Colonic mucosa (tissue), 4 donors: ENCODE measurements at regions of chr17 and their contacts with region 1.

Region 1: DNA sequence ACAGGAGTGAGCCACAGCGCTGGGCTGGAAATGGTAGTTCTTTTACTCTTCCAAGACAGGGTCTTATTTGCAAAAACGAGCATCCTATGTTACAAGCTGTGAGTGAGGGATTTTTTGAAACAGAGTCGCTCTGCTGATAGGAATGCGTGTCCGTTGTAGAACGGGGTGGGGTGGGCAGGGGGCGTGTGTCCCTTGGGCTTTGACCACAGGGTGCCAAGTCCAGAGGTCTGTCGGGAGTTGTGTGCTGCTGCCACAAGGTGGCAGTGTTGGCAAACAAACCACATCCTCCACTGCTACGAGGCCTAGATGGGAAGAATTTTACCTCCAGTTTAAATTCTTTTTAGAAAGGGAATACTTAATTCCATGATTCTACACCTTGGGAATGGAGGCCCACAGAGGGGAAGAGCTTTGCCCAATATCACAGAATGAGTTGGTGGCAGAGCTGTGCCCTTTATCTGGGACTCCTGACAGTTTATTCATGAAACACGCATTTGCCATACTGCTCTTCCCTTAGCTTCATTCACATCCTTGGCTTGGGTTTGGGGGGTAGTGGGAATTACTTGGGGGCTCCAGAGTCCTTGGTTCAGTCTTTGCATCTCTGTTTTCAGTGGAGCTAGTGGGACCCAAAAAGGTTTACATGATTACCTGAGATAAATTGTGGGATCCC is 30.6 kb upstream of the ETV4 start:
- DNase-seq: peak; percentile 76
- H3K4me3 ChIP-seq: no peak overlapping the region
- H3K27ac ChIP-seq: no peak overlapping the region
- H3K4me1 ChIP-seq: peaks cover 8% of the 10 kb centered on the region
- H3K27me3 ChIP-seq: no peaks in the 10 kb centered on the region
- CTCF ChIP-seq: peak; percentile 89

Region 2: GRCh38 chr17:43524945-43525575 is 51.6 kb before region 1 on chr17:
- intact Hi-C with region 1: loop called (anchors 5 kb)
- DNase-seq: no peak
- H3K4me3 ChIP-seq: no peak overlapping the region
- H3K27ac ChIP-seq: no peak overlapping the region
- H3K4me1 ChIP-seq: no peaks in the 10 kb centered on the region
- H3K27me3 ChIP-seq: no peaks in the 10 kb centered on the region
- CTCF ChIP-seq: no peak

Region 3: DNA sequence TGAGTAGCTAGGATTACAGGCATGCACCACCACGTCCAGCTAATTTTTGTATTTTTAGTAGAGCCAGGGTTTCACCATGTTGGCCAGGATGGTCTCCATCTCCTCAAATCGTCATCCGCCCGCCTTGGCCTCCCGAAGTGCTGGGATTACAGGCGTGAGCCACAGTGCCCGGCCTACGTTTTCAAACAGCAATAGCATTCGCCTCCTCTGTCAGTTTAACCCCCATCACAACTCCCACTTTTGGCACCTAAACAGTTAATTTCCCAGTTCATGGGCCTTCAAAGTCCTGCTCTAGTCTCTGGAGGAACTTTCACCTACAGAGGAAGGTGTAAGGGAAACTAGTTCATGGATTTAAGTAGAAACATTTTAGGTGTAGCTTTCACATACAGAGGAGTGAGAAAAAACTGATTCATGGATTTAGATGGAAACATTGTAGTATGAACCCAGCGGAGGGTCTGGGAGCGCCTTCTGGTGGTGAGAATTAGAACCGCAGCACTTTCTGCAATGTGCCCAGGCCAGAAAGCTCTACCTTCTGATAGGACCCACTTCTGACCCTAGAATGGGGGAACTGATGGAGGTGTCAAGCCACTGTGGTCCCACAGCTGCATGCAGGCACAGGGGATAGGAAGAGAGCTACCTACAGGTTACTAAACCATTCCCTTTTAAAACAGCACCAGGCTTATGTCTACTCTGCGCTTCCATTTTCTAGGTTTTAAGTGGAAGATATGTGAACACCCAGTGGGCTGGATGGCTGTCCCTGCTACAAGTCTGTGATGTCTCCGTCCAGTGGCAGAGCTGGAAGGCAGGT is 97.0 kb after region 1 on chr17:
- intact Hi-C with region 1: loop called (anchors 2 kb)
- DNase-seq: peak; percentile 81
- H3K4me3 ChIP-seq: no peak overlapping the region
- H3K27ac ChIP-seq: no peak overlapping the region
- H3K4me1 ChIP-seq: no peaks in the 10 kb centered on the region
- H3K27me3 ChIP-seq: no peaks in the 10 kb centered on the region
- CTCF ChIP-seq: peak; percentile 93

Region 4: GRCh38 chr17:43760254-43760852 is 183.7 kb after region 1 on chr17:
- intact Hi-C with region 1: loop called (anchors 5 kb)
- DNase-seq: peak; percentile 97
- H3K4me3 ChIP-seq: no peak overlapping the region
- H3K27ac ChIP-seq: no peak overlapping the region
- H3K4me1 ChIP-seq: peaks cover 3% of the 10 kb centered on the region
- H3K27me3 ChIP-seq: peaks cover 7% of the 10 kb centered on the region
- CTCF ChIP-seq: peak; percentile 95